ENCODE measurements at regions of chr2 and their contacts with region 1.

Region 1: GRCh38 chr2:141399270-141399669 is 731.5 kb downstream of the LRP1B start:
- DNase-seq: no peak
- H3K4me3 ChIP-seq: no peak overlapping the region
- H3K27ac ChIP-seq: no peak overlapping the region
- H3K4me1 ChIP-seq: no peaks in the 10 kb centered on the region
- H3K27me3 ChIP-seq: no peaks in the 10 kb centered on the region
- CTCF ChIP-seq: no peak

Region 2: DNA sequence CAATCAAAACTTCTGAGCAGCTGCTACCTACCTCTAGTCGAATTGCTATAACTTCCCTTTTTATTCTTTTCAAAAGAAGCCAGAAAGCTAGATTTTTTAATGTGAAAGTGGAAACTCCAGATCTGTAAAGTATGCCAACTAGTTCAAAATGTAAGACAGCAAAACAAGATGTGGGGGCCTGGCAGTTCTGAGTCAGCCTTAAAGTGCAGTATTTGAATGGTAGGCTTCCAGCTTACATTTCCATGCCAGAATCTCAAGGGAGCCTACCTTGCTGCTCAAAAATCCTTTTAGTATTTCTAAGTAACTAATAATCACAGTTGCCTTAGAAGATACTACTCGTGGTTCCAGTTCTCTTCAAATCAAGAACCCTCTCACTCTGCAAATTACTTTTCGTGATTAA is 557.2 kb before region 1 on chr2:
- CTCF ChIA-PET with region 1: no interaction called
- POLR2A ChIA-PET with region 1: no interaction called
- intact Hi-C with region 1: no loop called
- DNase-seq: no peak
- H3K4me3 ChIP-seq: no peak overlapping the region
- H3K27ac ChIP-seq: no peak overlapping the region
- H3K4me1 ChIP-seq: no peaks in the 10 kb centered on the region
- H3K27me3 ChIP-seq: no peaks in the 10 kb centered on the region
- CTCF ChIP-seq: no peak

Region 3: DNA sequence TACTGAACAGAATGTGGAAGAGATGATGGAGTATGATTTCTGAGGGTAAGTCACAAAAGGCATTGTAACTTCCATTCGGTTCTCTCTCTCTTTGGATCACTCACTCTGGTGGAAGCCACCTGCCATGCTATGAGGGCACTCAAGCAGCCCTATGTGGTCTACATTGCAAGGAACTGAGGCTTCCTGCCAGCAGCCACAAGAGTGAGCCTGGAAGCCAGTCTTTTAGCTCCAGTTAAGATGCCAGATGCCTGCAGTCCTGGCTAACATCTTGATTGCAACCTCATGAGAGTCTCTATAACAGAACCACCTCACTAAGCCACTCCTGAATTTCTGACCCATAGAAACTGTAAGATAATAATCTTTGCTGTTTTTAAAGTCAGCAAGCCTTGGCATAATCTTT is 204.2 kb before region 1 on chr2:
- CTCF ChIA-PET with region 1: no interaction called
- POLR2A ChIA-PET with region 1: no interaction called
- intact Hi-C with region 1: loop called (anchors 10 kb)
- DNase-seq: no peak
- H3K4me3 ChIP-seq: no peak overlapping the region
- H3K27ac ChIP-seq: no peak overlapping the region
- H3K4me1 ChIP-seq: no peaks in the 10 kb centered on the region
- H3K27me3 ChIP-seq: no peaks in the 10 kb centered on the region
- CTCF ChIP-seq: no peak

Region 4: GRCh38 chr2:141384676-141385075 is 14.6 kb before region 1 on chr2:
- CTCF ChIA-PET with region 1: no interaction called
- POLR2A ChIA-PET with region 1: no interaction called
- intact Hi-C with region 1: no loop called
- DNase-seq: no peak
- H3K4me3 ChIP-seq: no peak overlapping the region
- H3K27ac ChIP-seq: no peak overlapping the region
- H3K4me1 ChIP-seq: no peaks in the 10 kb centered on the region
- H3K27me3 ChIP-seq: no peaks in the 10 kb centered on the region
- CTCF ChIP-seq: no peak

Region 5: GRCh38 chr2:141423124-141423523 is 23.9 kb after region 1 on chr2:
- CTCF ChIA-PET with region 1: no interaction called
- POLR2A ChIA-PET with region 1: no interaction called
- intact Hi-C with region 1: no loop called
- DNase-seq: no peak
- H3K4me3 ChIP-seq: no peak overlapping the region
- H3K27ac ChIP-seq: no peak overlapping the region
- H3K4me1 ChIP-seq: no peaks in the 10 kb centered on the region
- H3K27me3 ChIP-seq: no peaks in the 10 kb centered on the region
- CTCF ChIP-seq: no peak

Measured in PC-9 (cell line).